Activated CD8-positive, alpha-beta T cell treated with anti-CD3 and anti-CD28 coated beads for 36 hours (primary cell): ENCODE measurements at regions of chr9 and their contacts with region 1.

Region 1: DNA sequence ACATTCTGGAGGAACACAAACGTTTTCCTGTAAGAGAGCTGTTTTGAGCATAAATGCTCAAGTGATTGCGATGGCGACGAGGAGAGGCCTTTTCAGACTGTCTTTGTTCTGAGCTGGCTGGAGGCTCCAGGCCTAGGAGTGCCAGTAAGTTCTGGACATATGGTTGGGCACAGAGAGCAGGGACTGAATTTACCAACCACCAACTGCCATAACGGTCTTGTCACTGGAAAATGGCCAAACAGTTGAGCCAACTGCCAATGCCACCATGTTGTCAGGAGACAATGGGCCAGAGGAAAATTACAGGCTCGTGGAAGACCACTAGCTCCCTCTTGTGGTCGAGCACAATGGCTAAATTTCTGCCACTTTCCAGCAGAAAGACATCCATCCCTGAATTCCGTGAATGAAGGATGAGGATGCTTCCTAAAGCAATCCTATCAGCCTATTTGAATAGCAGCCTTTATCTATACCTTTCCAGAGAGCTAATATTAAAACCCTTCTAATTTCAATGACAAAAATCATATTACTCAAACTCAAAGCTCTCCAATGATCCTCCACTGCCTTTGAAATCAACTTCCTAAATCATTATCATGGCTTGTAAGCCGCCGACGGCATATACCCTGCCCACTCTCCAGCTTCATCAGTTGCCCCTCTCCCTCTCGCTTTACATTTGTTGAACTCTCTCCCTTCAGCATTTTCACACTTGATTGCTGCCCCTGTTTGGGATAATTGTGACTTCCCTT is 66.9 kb upstream of the GLIS3 start:
- DNase-seq: peak; percentile 48
- ATAC-seq: no peak
- H3K4me3 Mint-ChIP-seq: no peak overlapping the region
- H3K27ac Mint-ChIP-seq: no peak overlapping the region
- H3K4me1 Mint-ChIP-seq: peaks cover 3% of the 10 kb centered on the region
- H3K27me3 Mint-ChIP-seq: peaks cover 2% of the 10 kb centered on the region
- CTCF ChIP-seq: peak; percentile 75

Region 2: DNA sequence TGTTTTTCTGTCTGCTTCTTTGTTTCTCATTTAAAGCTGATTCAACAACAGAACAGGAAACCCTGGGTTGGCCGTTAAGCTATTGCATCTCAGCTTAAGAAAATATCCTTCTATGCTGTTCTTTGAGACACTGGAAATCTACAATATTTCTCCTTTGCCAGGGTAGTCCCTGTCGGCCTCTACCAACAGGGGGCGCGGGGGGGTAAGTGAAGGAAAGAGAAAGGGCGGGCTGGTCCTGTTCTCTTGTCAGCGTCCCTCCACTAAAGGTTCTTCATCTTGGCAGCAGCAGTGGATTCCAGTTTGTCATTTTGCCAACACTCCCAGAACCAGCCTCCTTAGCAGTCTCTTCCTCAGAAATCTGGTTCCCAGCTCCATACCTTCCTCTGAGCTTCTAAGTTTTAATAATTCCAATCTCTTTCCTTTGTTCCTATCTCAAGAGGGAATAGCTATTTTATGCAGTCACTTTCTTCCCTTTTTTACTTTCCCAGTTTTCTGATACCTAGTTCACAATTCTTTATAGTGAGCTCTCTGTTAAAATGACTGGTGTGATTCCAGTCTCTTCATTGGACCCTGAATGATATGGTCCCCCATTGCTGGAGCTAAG is 289.2 kb before region 1 on chr9:
- CTCF ChIA-PET with region 1: interaction called, 11 read pairs
- POLR2A ChIA-PET with region 1: no interaction called
- intact Hi-C with region 1: no loop called
- DNase-seq: peak; percentile 75
- ATAC-seq: peak; percentile 49
- H3K4me3 Mint-ChIP-seq: no peak overlapping the region
- H3K27ac Mint-ChIP-seq: no peak overlapping the region
- H3K4me1 Mint-ChIP-seq: no peaks in the 10 kb centered on the region
- H3K27me3 Mint-ChIP-seq: peaks cover 18% of the 10 kb centered on the region
- CTCF ChIP-seq: peak; percentile 65

Region 3: GRCh38 chr9:4315582-4316215 is 51.1 kb before region 1 on chr9:
- CTCF ChIA-PET with region 1: interaction called, 147 read pairs
- POLR2A ChIA-PET with region 1: interaction called, 5 read pairs
- intact Hi-C with region 1: loop called (anchors 5 kb)
- DNase-seq: peak; percentile 89
- ATAC-seq: peak; percentile 98
- H3K4me3 Mint-ChIP-seq: no peak overlapping the region
- H3K27ac Mint-ChIP-seq: no peak overlapping the region
- H3K4me1 Mint-ChIP-seq: peaks cover 17% of the 10 kb centered on the region
- H3K27me3 Mint-ChIP-seq: peaks cover 4% of the 10 kb centered on the region
- CTCF ChIP-seq: peak; percentile 89

Region 4: GRCh38 chr9:4339357-4339756 is 27.4 kb before region 1 on chr9:
- CTCF ChIA-PET with region 1: interaction called, 43 read pairs
- POLR2A ChIA-PET with region 1: interaction called, 3 read pairs
- intact Hi-C with region 1: no loop called
- DNase-seq: peak; percentile 95
- ATAC-seq: peak; percentile 95
- H3K4me3 Mint-ChIP-seq: peak overlapping the region; percentile 47
- H3K27ac Mint-ChIP-seq: peak overlapping the region; percentile 60
- H3K4me1 Mint-ChIP-seq: peaks cover 12% of the 10 kb centered on the region
- H3K27me3 Mint-ChIP-seq: no peaks in the 10 kb centered on the region
- CTCF ChIP-seq: peak; percentile 88

Region 5: DNA sequence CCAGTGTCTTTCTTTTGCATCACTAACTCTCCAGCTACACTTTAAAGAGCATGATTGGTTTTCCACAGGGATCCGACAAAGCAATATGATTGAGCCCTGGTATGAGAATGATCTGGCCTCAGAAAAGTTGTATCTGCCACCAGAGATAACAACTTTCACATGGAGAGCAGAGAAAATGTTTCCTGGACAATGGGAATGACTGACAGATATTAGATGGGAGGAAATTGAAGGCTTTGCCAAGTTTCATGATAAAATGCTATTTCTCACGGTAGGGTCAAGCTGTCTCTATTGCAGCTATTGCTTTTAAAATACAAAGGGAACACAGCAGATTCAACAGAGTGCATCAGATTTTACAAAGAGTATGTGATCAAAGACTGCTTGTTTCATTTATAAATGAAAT is 10.5 kb before region 1 on chr9:
- CTCF ChIA-PET with region 1: interaction called, 18 read pairs
- POLR2A ChIA-PET with region 1: no interaction called
- intact Hi-C with region 1: no loop called
- DNase-seq: no peak
- ATAC-seq: no peak
- H3K4me3 Mint-ChIP-seq: no peak overlapping the region
- H3K27ac Mint-ChIP-seq: no peak overlapping the region
- H3K4me1 Mint-ChIP-seq: no peaks in the 10 kb centered on the region
- H3K27me3 Mint-ChIP-seq: peaks cover 4% of the 10 kb centered on the region
- CTCF ChIP-seq: no peak

Region 6: GRCh38 chr9:4555251-4555650 is 188.5 kb after region 1 on chr9:
- CTCF ChIA-PET with region 1: no interaction called
- POLR2A ChIA-PET with region 1: no interaction called
- intact Hi-C with region 1: no loop called
- DNase-seq: no peak
- ATAC-seq: no peak
- H3K4me3 Mint-ChIP-seq: no peak overlapping the region
- H3K27ac Mint-ChIP-seq: no peak overlapping the region
- H3K4me1 Mint-ChIP-seq: peaks cover 17% of the 10 kb centered on the region
- H3K27me3 Mint-ChIP-seq: no peaks in the 10 kb centered on the region
- CTCF ChIP-seq: no peak